Calu3 (cell line): ENCODE measurements at regions of chr15 and their contacts with region 1.

Region 1: GRCh38 chr15:49135893-49136292 is 19.5 kb downstream of the COPS2 start:
- DNase-seq: peak; percentile 5
- H3K4me3 Mint-ChIP-seq: peak overlapping the region; percentile 46
- H3K27ac Mint-ChIP-seq: peak overlapping the region; percentile 83
- H3K4me1 Mint-ChIP-seq: peaks cover 15% of the 10 kb centered on the region
- H3K27me3 Mint-ChIP-seq: no peaks in the 10 kb centered on the region
- CTCF ChIP-seq: no peak

Region 2: DNA sequence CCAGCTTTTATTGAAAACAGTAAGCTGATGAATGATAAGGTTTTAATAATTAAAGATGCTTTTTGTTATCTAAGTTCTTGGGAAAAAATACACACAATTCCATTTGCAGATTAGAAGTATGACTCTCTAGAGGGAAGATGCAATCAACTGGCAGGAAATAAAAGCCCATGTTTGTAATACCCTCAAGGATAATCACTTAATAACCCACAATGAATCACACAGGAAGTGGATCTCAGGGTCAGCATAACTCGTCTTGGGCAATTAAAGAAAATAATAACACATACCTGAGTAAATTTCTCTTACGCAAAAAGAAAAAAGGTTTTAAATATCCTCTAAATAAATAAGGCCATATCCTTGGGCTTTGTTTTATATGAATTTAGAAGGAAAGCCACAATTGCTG is 267.4 kb before region 1 on chr15:
- CTCF ChIA-PET with region 1: no interaction called
- intact Hi-C with region 1: loop called (anchors 5 kb)
- DNase-seq: no peak
- H3K4me3 Mint-ChIP-seq: no peak overlapping the region
- H3K27ac Mint-ChIP-seq: no peak overlapping the region
- H3K4me1 Mint-ChIP-seq: peaks cover 44% of the 10 kb centered on the region
- H3K27me3 Mint-ChIP-seq: no peaks in the 10 kb centered on the region
- CTCF ChIP-seq: no peak

Region 3: DNA sequence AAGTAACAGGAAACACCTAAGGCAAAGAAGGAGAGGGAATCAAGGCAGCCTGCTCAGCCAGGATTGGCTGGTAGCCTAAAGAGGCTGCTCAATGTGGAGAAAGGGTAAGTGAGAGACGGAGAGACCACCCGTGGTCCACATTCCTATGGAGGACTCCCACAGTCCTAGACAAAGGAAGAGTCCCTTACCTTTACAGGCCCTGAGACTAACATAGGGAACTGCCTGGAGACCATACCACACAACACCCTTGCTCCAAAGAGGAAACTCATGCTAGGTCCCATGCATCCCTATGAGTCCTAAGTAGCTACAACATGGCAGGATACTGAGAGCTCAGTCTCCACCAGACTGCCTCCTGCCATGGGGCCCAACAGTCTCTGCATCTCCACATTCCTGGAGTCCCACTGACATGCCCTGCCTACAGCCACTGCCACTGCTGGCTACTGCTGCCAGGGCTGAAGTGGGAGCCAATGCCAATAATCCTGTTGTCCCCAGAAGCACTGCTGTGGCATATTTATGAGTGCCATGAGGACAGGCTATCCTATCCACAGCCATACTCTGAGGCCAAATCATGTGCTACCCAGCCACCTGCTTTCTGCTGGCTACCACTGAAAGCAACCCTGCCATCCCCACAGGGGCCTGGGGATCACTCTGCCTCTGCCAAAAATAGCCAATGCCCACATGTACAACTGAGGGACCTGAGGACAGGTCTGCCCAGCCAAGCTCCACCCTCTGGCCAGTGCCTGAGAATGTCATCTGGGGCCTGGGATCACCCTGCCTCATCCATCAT is 25.5 kb before region 1 on chr15:
- CTCF ChIA-PET with region 1: no interaction called
- intact Hi-C with region 1: no loop called
- DNase-seq: no peak
- H3K4me3 Mint-ChIP-seq: no peak overlapping the region
- H3K27ac Mint-ChIP-seq: no peak overlapping the region
- H3K4me1 Mint-ChIP-seq: no peaks in the 10 kb centered on the region
- H3K27me3 Mint-ChIP-seq: no peaks in the 10 kb centered on the region
- CTCF ChIP-seq: no peak

Region 4: DNA sequence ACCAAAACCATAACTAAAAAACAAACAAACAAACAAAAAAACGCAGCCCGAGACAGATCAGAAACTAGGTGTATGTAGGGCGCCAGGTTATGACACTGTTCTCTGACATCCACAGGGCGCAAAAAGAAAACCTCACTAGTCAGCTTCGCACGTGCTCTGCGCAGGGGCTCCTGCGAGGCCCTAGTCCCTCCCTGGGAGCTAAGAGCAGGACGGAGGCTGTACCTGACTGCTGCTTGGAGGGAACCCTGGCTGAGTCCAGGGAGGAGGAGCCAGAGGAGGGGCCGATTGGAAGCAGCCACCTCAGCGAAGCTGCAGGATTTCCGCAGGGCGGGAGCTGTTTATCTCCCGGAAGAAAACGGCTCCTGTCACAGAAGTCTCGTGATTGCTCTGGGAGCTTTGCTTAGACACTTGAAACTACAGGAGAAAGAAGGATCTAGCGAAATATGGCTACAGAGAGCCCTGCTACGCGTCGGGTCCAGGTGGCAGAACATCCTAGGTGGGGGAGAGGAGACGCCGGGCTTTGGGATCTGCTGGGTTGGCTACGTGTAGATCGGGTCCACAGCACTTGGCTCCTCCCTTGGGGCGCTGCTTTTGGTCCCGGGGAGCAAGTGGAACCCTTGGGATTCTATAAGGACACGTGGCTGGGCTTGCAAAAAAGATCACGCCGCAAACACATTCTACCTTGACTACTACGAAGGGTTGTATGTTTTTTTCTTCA is 34.1 kb after region 1 on chr15 and contains the start of gene GALK2:
- CTCF ChIA-PET with region 1: no interaction called
- intact Hi-C with region 1: loop called (anchors 1 kb)
- DNase-seq: peak; percentile 88
- H3K4me3 Mint-ChIP-seq: peak within 1 kb of the TSS; percentile 93
- H3K27ac Mint-ChIP-seq: peak within 1 kb of the TSS; percentile 97
- H3K4me1 Mint-ChIP-seq: peaks cover 16% of the 10 kb centered on the region
- H3K27me3 Mint-ChIP-seq: no peaks in the 10 kb centered on the region
- CTCF ChIP-seq: no peak
- total RNA-seq, gene GALK2: 44.2 and 48.3 TPM in 2 replicates